IMR-90 (cell line): ENCODE measurements at regions of chr11 and their contacts with region 1.

Region 1: DNA sequence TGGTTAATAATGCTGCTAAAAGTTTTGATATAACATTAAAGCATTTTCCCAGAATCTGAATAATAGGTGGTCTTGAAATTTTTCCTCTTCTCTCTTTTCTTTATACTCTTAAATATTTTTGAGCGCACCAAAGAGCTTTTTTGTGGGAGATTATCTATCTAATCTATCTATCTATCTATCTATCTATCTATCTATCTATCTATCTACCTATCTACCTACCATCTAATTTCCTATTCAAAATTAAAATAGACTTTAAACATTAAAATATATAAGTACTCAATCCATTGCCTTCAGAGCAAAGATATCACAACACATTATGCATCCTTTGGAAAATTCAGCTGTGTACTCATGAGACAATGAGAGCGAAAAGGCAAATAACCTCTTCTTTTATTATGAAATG is 55.8 kb downstream of the ELMOD1 start:
- DNase-seq: no peak
- ATAC-seq: no peak
- H3K4me3 ChIP-seq: no peak overlapping the region
- H3K27ac ChIP-seq: no peak overlapping the region
- H3K4me1 ChIP-seq: no peaks in the 10 kb centered on the region
- H3K27me3 ChIP-seq: peaks cover 4% of the 10 kb centered on the region; the same call in 1 of the 2 replicates
- CTCF ChIP-seq: no peak
- POLR2A ChIP-seq: no peak
- RAD21 ChIP-seq: no peak

Region 2: GRCh38 chr11:107631931-107632330 is 14.9 kb before region 1 on chr11:
- CTCF ChIA-PET with region 1: interaction called, 4 read pairs
- POLR2A ChIA-PET with region 1: no interaction called
- dilution Hi-C with region 1: no loop called
- in situ Hi-C with region 1: no loop called
- intact Hi-C with region 1: loop called (anchors 1 kb)
- DNase-seq: no peak
- ATAC-seq: no peak
- H3K4me3 ChIP-seq: no peak overlapping the region
- H3K27ac ChIP-seq: no peak overlapping the region
- H3K4me1 ChIP-seq: no peaks in the 10 kb centered on the region
- H3K27me3 ChIP-seq: peaks cover 4% of the 10 kb centered on the region; the same call in 1 of the 2 replicates
- CTCF ChIP-seq: no peak
- POLR2A ChIP-seq: no peak
- RAD21 ChIP-seq: no peak